ENCODE measurements at regions of chr12 and their contacts with region 1.

Region 1: GRCh38 chr12:94532490-94533422 is 73.1 kb upstream of the CEP83 start:
- DNase-seq: peak in 1 of 2 donors; percentile 78
- ATAC-seq: peak; percentile 82

Region 2: DNA sequence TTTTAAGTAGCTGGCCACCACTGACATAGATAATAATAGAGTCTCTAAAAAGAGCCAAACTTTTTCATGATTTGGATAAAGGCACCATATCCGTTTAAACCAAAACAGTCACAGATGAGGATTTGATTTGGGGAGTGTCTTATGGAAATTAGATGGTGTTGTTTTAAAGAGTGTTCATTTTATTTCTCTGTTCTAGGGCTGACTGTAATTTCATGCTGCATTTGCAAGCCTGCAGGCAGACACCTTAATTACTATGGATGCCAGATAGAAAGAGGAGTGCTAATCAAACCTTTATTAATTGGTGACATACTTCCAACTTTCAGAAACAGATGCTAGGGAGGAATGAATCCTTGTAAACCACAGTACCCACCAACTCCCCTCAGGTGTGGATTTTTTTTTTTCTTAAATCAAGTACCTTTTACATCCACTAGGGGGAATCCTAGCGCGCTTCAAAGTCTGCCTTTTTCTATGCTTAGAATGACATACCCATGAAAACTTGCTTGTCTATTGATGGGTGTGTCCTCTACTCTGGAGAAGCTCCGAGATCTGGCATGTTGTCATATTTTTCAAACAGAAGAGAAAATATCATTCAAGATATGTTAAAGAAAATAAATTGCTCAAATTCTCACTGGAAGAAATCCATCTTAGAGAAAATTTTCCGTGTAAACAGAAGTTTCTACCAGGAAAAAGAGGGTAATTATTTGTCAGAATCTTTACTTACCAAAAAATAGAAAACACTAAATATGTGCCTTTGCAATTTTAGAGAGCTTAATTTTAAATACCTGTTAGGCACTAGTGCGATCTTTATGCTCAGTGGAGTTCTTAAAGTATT is 398.6 kb before region 1 on chr12:
- intact Hi-C with region 1: loop called in 1 of 2 experiments (anchors 5 kb)
- DNase-seq: no peak
- ATAC-seq: peak; percentile 96

Region 3: GRCh38 chr12:94149119-94149780 is 383.5 kb before region 1 on chr12:
- intact Hi-C with region 1: loop called in 1 of 2 experiments (anchors 5 kb)
- DNase-seq: peak; percentile 56 to 71
- ATAC-seq: peak; percentile 31

Region 4: GRCh38 chr12:94586589-94587259 is 54.0 kb after region 1 on chr12:
- intact Hi-C with region 1: no loop called
- DNase-seq: peak in 1 of 2 donors; percentile 49
- ATAC-seq: peak; percentile 79

Region 5: DNA sequence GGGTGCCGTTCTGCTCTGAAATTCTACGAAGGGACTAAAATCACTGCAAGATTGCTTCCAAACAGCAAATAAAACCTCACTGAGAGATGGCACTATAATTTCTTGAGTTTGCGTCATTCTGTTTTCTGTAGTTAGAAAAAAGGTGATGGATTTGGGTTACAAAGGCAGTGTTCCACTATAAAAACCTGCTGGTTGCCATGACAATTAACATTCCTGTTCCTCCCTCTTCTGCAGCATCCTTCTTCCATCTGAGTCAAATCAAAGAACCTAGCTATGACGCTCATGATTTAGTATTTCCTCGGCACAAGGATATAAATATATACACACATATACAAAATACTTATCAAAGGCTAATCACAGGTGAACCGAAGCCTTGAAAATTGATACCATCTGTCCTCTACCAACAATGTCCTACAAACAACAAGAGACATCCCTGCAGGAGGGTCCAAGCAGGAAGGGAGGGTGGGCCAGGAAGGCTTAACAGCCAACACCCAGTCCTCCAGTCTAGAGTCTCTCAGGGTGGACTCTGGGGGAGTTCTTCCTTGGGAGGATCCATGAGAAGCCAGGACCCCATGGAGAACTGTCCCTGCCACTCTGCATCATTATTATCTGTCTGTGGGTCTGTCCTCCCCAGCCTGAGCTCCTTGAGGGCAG is 96.2 kb after region 1 on chr12:
- intact Hi-C with region 1: no loop called
- DNase-seq: no peak
- ATAC-seq: no peak

Region 6: GRCh38 chr12:94779485-94779884 is 246.7 kb after region 1 on chr12:
- intact Hi-C with region 1: no loop called
- DNase-seq: no peak
- ATAC-seq: no peak

Measured in left colon (tissue), 2 donors.